Stomach (tissue), 19 donors: ENCODE measurements at regions of chr6 and their contacts with region 1.

Region 1: GRCh38 chr6:149935668-149936067 is 6.1 kb upstream of the ULBP2 start:
- DNase-seq: no peak
- H3K4me3 ChIP-seq: no peak overlapping the region
- H3K27ac ChIP-seq: no peak overlapping the region
- H3K4me1 ChIP-seq: peaks cover 10 to 13% (median 11%) of the 10 kb centered on the region in 4 donors
- H3K27me3 ChIP-seq: peaks cover 22 to 98% (median 63%) of the 10 kb centered on the region in 3 donors
- CTCF ChIP-seq: no peak
- EP300 ChIP-seq: no peak
- POLR2A ChIP-seq: no peak

Region 2: DNA sequence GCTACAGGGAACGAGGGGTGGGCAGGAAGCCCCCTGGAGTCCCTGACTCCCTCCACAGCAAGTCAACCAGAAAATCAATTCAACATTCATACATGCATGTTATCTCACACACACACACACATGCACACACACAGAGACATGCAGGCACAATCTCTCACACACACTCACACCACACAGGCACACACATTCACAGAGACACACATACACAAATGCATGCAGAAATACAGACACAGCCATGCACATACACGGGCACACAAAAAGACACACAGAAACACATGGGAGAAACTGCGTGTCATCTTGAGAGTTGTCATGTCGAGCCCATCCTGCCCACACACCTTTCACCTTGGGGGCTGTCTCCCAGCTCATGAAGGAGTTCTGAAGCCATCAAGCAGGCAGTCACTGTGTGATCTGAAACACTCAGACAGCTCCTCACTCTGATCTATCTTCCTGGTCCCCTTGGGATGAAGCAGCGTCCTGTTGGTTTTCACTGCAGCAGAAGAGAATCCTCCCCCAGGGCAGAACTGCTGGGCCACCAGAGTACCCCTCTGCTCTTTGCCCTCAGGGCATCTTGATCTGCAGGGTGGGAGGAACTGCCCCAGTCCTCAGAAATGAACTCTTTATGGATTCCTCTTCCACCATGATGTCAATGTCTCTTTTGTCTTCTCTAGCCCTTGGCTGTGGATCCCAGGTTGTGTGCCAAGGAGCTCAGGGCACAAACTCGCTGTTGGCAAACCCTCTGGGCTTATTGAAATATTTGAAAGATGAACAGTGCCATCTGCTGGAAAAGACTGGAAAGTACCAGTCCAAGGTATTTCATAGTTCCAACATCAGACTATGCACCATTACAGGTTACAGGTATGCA is 80.9 kb after region 1 on chr6:
- intact Hi-C with region 1: loop called (anchors 2 kb)
- DNase-seq: peak; percentile 67 to 84
- H3K4me3 ChIP-seq: no peak overlapping the region
- H3K27ac ChIP-seq: no peak overlapping the region
- H3K4me1 ChIP-seq: peaks cover 4 to 19% (median 9%) of the 10 kb centered on the region in 4 donors
- H3K27me3 ChIP-seq: peaks cover 12 to 75% (median 51%) of the 10 kb centered on the region in 3 donors
- CTCF ChIP-seq: peak in 5 of 7 experiments; percentile 64 to 77 (median 71)
- EP300 ChIP-seq: no peak
- POLR2A ChIP-seq: no peak